ENCODE measurements at regions of chr2 and their contacts with region 1.

Region 1: DNA sequence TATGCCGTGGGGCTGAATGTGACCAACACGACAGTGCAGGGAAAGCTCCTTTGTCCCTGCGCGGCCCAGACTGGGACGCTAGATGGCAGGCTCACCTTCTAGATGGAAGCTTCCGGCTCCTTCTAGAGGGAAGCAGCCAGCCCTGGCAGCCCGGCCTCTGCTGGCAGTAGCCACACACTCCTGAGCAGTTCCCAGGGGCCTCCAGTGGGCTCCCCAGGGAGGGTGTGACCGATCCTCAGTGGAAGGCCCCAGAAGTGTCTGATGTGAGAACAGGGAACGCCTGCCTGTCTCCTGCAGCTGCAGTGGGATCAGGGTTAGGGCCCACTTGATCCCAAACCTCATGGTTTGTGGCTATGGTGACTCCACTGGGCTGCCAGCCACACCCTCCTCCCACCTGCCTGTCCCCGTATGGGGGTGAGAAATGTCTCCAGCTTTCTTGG is 48.5 kb upstream of the LRPPRC start:
- DNase-seq: peak; percentile 90
- H3K4me3 Mint-ChIP-seq: no peak overlapping the region
- H3K27ac Mint-ChIP-seq: no peak overlapping the region
- H3K4me1 Mint-ChIP-seq: no peaks in the 10 kb centered on the region
- H3K27me3 Mint-ChIP-seq: no peaks in the 10 kb centered on the region

Region 2: DNA sequence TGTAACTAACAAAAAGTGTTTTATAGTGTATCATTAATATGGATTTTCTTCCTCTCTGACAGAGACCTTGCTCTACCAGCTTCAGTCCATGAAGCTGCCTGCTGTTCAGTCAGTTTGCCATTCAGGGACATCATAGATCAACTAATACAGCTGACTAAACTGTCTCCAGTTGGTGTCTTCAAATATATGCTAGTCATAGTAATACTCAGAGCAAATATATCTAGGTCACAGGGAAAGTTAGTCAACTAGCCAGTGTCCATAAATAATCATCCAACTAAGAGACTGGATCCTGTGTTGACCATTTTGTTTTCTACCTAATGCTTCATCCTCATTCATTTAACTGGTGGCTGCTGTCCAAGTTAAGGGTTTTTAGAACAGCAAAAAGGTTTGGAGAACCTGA is 10.4 kb before region 1 on chr2:
- CTCF ChIA-PET with region 1: interaction called, 12 read pairs
- POLR2A ChIA-PET with region 1: no interaction called
- intact Hi-C with region 1: no loop called
- DNase-seq: no peak
- H3K4me3 Mint-ChIP-seq: no peak overlapping the region
- H3K27ac Mint-ChIP-seq: no peak overlapping the region
- H3K4me1 Mint-ChIP-seq: no peaks in the 10 kb centered on the region
- H3K27me3 Mint-ChIP-seq: no peaks in the 10 kb centered on the region

Region 3: GRCh38 chr2:44169155-44169898 is 125.0 kb after region 1 on chr2:
- CTCF ChIA-PET with region 1: no interaction called
- POLR2A ChIA-PET with region 1: no interaction called
- intact Hi-C with region 1: no loop called
- DNase-seq: peak; percentile 62
- H3K4me3 Mint-ChIP-seq: peak overlapping the region; percentile 88
- H3K27ac Mint-ChIP-seq: peak overlapping the region; percentile 98
- H3K4me1 Mint-ChIP-seq: peaks cover 42% of the 10 kb centered on the region
- H3K27me3 Mint-ChIP-seq: no peaks in the 10 kb centered on the region

Region 4: DNA sequence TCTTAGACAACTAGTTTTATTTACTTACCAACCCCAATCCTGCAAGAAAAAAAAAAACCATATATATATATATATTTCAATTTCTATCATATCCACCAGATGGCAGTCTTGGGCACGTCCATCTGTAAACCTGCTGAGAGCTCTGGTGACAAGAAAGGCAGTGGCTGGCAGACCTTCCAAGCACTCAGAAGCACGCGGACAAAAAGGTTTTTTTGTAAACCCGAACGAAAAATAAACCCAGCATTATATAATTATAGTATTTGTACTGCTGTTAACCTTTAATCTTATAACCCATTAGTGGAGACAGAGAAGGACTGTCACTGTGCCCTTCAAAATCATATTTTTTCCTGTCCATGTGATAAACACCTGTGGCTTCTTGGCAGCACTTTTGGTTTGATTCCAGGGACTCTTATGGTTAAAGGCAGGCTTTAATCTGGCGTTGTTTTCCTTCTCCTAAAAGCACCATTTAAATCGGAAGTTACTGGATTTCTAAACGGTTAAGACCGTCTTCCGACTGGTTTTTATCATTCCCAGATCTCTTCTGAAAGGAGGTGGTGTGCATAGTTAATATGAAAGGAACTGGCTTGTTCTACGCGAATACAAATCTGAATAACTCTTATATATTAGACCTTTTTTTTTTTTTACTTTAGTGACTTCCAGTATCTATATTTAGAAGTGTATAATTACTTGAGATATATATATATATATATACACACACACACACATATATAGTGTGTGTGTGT is 200.0 kb after region 1 on chr2:
- CTCF ChIA-PET with region 1: interaction called, 8 read pairs
- POLR2A ChIA-PET with region 1: no interaction called
- intact Hi-C with region 1: loop called (anchors 5 kb)
- DNase-seq: peak; percentile 64
- H3K4me3 Mint-ChIP-seq: peak overlapping the region; percentile 66
- H3K27ac Mint-ChIP-seq: no peak overlapping the region
- H3K4me1 Mint-ChIP-seq: peaks cover 12% of the 10 kb centered on the region
- H3K27me3 Mint-ChIP-seq: no peaks in the 10 kb centered on the region

Region 5: GRCh38 chr2:44342854-44343253 is 298.6 kb after region 1 on chr2:
- CTCF ChIA-PET with region 1: interaction called, 18 read pairs
- POLR2A ChIA-PET with region 1: no interaction called
- intact Hi-C with region 1: loop called (anchors 1 kb)
- DNase-seq: no peak
- H3K4me3 Mint-ChIP-seq: no peak overlapping the region
- H3K27ac Mint-ChIP-seq: no peak overlapping the region
- H3K4me1 Mint-ChIP-seq: no peaks in the 10 kb centered on the region
- H3K27me3 Mint-ChIP-seq: no peaks in the 10 kb centered on the region

Region 6: GRCh38 chr2:44955593-44956392 is 911.5 kb after region 1 on chr2:
- CTCF ChIA-PET with region 1: interaction called, 20 read pairs
- POLR2A ChIA-PET with region 1: no interaction called
- intact Hi-C with region 1: loop called (anchors 5 kb)
- DNase-seq: peak; percentile 83
- H3K4me3 Mint-ChIP-seq: no peak overlapping the region
- H3K27ac Mint-ChIP-seq: no peak overlapping the region
- H3K4me1 Mint-ChIP-seq: peaks cover 9% of the 10 kb centered on the region
- H3K27me3 Mint-ChIP-seq: peaks cover 47% of the 10 kb centered on the region